GM18951 (cell line): ENCODE measurements at regions of chr2 and their contacts with region 1.

Region 1: DNA sequence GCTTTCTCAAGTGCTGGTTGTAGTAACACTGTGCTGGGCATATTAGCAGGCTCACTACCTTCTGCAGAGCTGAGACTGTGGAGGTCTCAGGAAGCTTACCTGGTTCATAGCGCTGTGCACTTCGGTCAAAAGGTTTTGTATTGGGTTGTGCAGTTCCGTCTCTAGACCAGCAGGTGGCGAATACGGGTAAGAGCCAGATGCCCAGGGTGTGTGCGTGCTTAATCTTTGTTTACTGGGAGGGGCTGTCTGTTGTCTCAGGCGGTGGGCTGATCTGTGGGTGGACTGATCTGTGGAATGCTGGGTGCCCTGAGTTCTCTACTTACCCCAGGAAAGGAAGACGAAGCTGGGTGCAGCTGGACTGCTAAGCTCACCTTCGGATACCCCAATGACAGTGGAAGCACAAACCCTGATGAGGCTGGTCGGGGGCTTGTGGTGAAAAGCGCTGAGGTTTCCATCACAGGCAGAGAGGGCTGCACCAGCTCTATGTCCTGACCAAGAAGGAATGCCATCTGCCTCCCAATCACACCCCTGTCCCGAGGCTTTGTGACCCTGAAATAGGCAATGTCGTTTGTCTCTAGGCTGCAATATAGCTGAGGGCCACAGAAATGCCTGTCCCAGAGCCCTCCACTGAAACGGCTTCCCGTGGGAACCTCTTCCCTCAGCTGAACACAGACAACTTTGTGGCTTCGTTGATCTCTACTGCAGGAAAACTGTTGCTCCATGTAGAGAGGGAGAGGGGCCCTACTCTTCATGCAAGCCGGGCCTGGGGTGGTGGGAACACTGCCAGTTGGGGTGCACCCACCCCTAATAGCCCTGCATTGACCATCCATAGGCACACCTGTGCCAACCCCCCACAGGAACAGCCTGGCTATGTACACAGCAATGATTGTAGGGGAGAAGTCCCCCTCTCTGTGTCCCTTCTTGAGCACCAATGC is 45.9 kb upstream of the FAM117B start:
- POLR2A ChIP-seq: no peak

Region 2: GRCh38 chr2:202870431-202871299 is 281.8 kb after region 1 on chr2:
- in situ Hi-C with region 1: loop called (anchors 25 kb)
- POLR2A ChIP-seq: no peak

Region 3: DNA sequence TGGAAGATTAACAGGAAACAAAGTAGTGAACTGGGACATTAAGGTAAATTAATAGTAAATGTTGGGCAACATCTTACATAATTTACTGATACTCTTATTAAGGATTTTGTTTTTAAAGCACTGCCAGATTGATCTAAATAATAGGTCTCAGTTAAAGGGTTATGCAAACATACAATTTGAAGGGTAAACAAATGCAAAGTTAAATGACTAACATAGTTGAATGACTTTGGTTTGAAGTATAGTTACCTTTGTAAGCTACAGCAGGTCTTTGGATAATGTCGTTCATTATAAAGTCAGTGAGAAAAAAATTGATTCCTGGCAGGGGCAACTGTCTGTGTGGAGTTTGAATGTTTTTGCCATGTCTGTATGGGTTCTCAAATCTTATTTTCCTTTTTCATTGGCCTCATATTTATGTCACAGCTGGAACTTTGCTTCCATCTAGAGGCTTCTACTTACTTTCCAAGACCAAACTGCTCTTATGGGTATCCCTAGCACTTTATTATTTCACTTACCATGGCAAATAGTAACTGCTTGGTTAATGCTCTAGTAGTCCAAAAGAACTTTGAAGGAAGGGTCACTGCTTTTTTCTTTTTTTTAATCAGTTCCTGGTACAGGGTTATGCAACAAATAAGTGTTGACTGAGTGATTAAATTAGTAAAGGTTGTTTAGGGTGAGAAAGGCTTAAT is 533.5 kb after region 1 on chr2:
- in situ Hi-C with region 1: loop called (anchors 25 kb)
- POLR2A ChIP-seq: no peak

Region 4: DNA sequence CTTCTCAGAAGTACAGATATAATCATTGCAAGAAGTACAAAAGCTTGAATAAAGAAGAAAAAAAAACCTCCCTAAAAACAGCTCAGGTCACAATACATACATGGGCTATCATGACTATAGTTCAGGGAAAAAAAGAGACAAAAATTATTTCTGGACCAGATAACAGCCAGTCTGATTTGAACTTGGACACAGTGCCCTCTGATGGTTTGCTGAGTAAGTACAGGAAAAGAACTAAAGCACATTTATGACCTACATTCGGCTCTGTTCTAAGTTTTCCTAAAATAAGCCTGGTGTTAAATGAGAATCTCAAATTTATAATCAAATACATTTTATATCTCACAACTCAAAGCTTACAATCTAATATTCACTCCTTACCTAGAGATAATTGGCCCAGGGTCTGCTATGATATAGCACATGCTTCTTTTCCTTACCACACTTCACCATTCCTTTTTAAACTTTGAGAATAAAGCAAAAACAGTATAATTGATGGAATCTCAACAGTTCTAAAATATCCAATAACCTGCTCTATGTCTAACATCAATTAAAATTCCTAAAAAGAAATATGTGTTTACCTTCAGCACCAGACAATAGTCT is 865.0 kb after region 1 on chr2:
- in situ Hi-C with region 1: loop called (anchors 25 kb)
- POLR2A ChIP-seq: no peak